Esophagus squamous epithelium (tissue), 5 donors: ENCODE measurements at regions of chr11 and their contacts with region 1.

Region 1: GRCh38 chr11:59753650-59754493 is 1.3 kb upstream of the STX3 start:
- DNase-seq: peak; percentile 30
- H3K4me3 ChIP-seq: peak overlapping the region; percentile 65 to 98 (median 86)
- H3K27ac ChIP-seq: peak overlapping the region; percentile 95 to 98 (median 95)
- H3K4me1 ChIP-seq: peaks cover 5 to 38% (median 11%) of the 10 kb centered on the region in 3 donors
- H3K27me3 ChIP-seq: no peaks in the 10 kb centered on the region
- CTCF ChIP-seq: peak; percentile 89 to 98 (median 94)
- POLR2A ChIP-seq: no peak

Region 2: DNA sequence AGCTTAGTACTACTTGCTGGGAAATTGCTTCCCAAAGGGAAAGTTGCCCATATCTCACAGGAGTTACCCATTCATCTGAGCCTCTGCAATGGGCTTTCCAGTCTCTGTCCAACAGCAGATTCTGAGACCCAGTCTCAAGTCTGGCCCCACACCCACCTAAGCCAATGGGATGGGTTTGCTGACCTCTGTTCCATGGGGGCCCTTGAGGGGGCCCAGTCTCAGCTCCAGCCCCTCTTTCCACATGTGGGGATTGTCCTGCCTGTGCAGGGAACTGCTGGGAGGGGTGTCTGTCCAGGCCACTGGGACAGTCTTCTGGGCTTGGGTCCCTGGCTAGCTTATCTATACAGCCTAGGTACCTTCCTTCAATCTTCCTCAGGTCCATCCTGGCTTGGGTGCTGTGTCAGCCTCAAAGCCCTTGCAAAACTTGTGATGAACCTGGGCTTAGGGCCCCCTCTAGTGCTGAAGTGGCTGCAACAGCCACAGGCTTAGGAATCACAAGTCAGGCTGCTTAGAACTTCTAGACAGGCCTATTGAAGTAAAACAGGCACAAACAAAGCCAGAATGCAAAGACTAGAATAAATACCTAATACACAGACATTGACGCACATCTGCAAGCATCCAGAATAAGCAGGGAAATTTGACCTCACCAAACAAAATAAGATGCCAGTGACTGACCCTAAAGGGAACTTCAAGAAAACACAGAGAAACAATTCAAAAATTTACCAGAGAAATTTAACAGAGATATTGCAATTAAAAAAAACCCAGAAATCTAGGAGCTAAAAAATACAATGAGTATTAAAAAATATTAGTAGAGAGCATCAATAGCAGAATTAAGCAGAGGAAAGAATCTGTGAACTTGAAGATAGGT is 73.4 kb before region 1 on chr11:
- intact Hi-C with region 1: no loop called
- DNase-seq: no peak
- H3K4me3 ChIP-seq: no peak overlapping the region
- H3K27ac ChIP-seq: no peak overlapping the region
- H3K4me1 ChIP-seq: no peaks in the 10 kb centered on the region
- H3K27me3 ChIP-seq: no peaks in the 10 kb centered on the region
- CTCF ChIP-seq: peak in 5 of 6 experiments; percentile 47 to 69 (median 55)
- POLR2A ChIP-seq: no peak

Region 3: GRCh38 chr11:59802639-59803176 is 48.8 kb after region 1 on chr11:
- intact Hi-C with region 1: loop called (anchors 5 kb)
- DNase-seq: no peak
- H3K4me3 ChIP-seq: no peak overlapping the region
- H3K27ac ChIP-seq: no peak overlapping the region
- H3K4me1 ChIP-seq: peaks cover 0 to 24% (median 3%) of the 10 kb centered on the region in 3 donors
- H3K27me3 ChIP-seq: no peaks in the 10 kb centered on the region
- CTCF ChIP-seq: peak; percentile 36 to 75 (median 60)
- POLR2A ChIP-seq: no peak

Region 4: DNA sequence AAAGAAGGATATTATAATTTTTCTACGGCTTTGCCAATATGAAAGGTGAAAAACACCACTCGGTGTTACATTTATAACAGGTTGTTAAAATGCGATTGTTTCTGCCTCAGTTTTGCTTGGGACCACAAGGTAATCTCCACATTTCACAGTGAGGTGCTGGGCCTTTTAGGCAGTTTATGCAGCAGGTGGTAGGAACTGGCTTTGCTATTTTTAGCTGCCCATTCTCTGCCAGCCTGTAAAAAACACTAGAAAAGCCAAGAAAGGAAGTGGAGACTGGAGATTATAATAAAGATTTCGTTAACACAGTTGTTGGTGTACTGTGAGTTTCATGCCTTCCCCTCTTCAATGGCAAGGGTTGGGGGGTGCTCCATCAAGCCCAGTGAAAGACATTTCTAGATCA is 64.7 kb after region 1 on chr11:
- intact Hi-C with region 1: no loop called
- DNase-seq: no peak
- H3K4me3 ChIP-seq: no peak overlapping the region
- H3K27ac ChIP-seq: no peak overlapping the region
- H3K4me1 ChIP-seq: no peaks in the 10 kb centered on the region
- H3K27me3 ChIP-seq: no peaks in the 10 kb centered on the region
- CTCF ChIP-seq: no peak
- POLR2A ChIP-seq: no peak

Region 5: GRCh38 chr11:60206616-60207015 is 452.7 kb after region 1 on chr11:
- intact Hi-C with region 1: no loop called
- DNase-seq: no peak
- H3K4me3 ChIP-seq: no peak overlapping the region
- H3K27ac ChIP-seq: no peak overlapping the region
- H3K4me1 ChIP-seq: no peaks in the 10 kb centered on the region
- H3K27me3 ChIP-seq: no peaks in the 10 kb centered on the region
- CTCF ChIP-seq: no peak
- POLR2A ChIP-seq: no peak